ENCODE measurements at regions of chr16 and their contacts with region 1.

Region 1: GRCh38 chr16:54282202-54282927 is 4.2 kb downstream of the IRX3 start:
- DNase-seq: peak; percentile 48
- H3K27ac ChIP-seq: no peak overlapping the region
- CTCF ChIP-seq: peak; percentile 59

Region 2: GRCh38 chr16:54253118-54253517 is 29.2 kb before region 1 on chr16:
- CTCF ChIA-PET with region 1: interaction called, 11 read pairs
- POLR2A ChIA-PET with region 1: no interaction called
- DNase-seq: no peak
- H3K27ac ChIP-seq: no peak overlapping the region
- CTCF ChIP-seq: no peak

Region 3: DNA sequence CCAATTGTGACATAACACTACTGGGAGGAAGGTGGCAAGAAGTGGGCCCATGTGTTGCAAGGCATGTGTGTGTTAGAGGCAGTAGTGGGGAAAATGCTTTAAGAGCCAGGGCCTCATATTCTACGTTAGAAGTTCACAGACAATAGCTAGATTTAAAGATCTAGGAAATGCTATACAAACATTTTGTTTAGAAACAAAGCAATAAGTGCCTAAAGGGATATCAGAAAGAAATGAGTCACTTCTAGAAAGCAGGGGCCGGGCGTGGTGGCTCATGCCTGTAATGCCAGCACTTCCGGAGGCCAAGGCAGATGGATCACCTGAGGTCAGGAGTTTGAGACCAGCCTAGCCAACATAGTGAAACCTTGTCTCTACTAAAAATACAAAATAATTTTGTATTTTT is 395.2 kb after region 1 on chr16:
- CTCF ChIA-PET with region 1: no interaction called
- POLR2A ChIA-PET with region 1: no interaction called
- DNase-seq: peak; percentile 8
- H3K27ac ChIP-seq: no peak overlapping the region
- CTCF ChIP-seq: no peak